GM12878 (cell line): ENCODE measurements at regions of chr11 and their contacts with region 1.

Region 1: DNA sequence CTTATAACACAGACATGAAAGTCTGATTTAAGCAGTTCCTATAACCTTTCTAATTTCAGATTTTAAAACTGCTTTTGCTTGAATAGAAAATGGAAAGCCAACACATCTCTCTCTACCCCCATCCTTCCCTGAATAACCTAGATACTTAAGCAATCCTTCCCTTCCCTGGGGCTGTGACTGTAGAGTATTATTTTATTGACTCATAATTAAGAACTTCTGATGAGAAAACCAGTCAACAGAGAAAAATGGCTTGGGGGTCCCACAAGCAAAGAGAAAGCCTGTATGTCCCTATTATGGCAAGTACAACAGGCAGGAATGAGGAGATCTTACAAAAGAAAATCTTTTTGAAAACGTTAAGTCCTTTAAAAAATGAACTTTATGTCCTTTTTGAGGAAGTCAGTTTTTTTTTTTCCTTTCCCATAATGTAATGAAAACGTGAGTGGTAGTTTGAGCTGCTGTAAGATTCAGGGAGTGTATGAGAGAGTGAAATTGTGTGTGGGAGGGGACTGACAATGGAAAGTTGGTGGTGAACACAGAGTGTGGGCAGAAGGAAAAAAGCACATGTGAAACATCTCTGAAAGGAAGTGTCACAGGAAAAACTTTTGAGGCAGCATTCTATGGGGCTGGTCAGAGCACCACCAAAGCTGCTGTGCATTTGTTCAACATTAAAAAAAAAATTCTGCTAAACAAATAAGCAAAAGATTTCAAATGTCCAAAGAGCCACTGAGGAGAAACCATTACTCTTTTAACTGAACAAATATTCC is 154.6 kb downstream of the MAML2 start:
- DNase-seq: peak; percentile 75
- ATAC-seq: peak; percentile 67
- H3K4me3 ChIP-seq: no peak overlapping the region
- H3K27ac ChIP-seq: peak overlapping the region; percentile 93
- H3K4me1 ChIP-seq: peaks cover 76% of the 10 kb centered on the region
- H3K27me3 ChIP-seq: no peaks in the 10 kb centered on the region
- CTCF ChIP-seq: no peak
- EP300 ChIP-seq: peak; percentile 23 to 78; a peak in 3 of 4 replicates
- POLR2A ChIP-seq: no peak
- RAD21 ChIP-seq: no peak

Region 2: DNA sequence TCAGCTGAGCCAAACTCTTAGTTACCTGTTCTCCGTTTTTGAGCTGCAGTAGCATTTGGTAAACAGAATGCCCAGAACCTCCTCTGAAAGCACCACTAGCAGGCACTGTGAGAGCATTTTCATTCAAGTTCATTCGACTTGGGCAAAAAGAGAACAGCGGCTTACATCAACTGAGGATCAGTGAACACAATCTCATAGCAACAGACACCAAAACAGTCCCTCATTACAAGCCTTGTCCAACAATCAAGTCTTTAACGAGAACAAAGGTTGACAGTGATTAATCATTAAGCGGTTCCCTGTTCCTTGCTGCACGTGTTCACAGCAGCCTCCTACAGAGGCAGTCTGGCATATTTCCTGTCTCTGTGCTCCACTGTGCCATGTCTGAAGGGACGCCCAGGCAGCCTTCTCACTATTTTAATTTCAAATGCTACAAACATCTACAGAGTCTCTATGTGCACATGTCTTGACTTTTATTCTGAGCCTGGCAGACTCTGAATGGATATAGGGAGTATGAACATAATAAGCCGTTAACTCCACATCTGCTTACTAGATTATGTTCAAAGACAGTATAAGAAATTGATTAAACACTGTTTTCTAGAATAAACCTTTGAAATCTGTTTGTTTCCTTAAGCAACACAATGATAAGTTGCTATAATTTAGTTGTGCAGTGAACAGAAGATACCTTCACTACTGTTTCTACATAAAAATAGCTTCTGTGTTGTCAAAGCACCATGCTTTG is 176.2 kb before region 1 on chr11:
- CTCF ChIA-PET with region 1: interaction called, 3 read pairs
- POLR2A ChIA-PET with region 1: no interaction called
- RAD21 ChIA-PET with region 1: interaction called, 3 read pairs
- SMC1A ChIA-PET with region 1: interaction called, 4 read pairs
- in situ Hi-C with region 1: no loop called
- intact Hi-C with region 1: loop called (anchors 2 kb)
- DNase-seq: peak; percentile 96
- ATAC-seq: peak; percentile 93
- H3K4me3 ChIP-seq: no peak overlapping the region
- H3K27ac ChIP-seq: peak overlapping the region; percentile 59
- H3K4me1 ChIP-seq: peaks cover 32% of the 10 kb centered on the region
- H3K27me3 ChIP-seq: no peaks in the 10 kb centered on the region
- CTCF ChIP-seq: peak; percentile 78 to 91 (median 87)
- EP300 ChIP-seq: peak; percentile 76 to 86; a peak in 2 of 4 replicates
- POLR2A ChIP-seq: no peak
- RAD21 ChIP-seq: peak; percentile 84

Region 3: DNA sequence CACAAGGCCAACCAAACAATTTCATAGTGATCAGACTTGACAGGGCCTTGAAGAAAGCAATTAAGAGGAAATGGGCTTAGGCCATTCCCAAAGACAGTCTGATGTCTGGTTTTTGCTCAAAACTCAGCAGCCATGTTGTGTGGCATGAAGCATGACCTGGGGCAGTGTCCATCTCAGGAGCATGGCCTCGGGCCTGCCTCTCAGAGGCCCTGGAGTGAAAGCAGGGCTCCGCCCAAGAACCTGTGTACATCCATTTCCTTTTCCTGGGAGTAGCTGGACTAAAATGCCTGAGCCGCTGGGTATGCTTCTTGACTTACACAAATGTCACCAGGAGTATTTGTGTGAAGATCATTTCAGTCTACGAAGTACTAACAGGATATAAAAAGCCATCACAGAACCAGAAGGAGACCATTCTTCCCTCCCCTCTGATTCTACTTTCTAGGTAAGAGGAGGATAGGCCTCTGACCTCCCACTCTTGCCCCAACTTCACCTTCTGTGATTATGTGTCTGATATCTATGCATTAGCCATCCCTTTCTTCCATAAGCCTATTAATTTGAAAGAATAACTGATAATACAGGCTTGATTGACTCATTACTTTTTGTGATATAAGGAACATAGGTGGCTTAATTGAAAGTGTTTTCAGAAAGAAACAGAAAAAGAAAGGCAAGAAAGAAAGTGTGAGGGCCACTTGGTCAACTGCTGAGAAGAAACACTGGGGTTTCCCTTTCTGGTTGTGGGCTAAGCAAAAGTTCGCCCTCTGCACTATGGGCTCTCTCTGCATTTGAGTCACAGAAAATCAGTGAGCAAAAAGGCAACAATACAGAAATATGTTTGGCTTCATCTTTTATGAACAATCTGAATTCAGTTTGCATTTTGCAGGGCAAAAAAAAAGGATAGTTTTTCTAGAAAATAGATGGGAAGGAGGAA is 76.0 kb before region 1 on chr11:
- CTCF ChIA-PET with region 1: no interaction called
- POLR2A ChIA-PET with region 1: no interaction called
- RAD21 ChIA-PET with region 1: interaction called, 5 read pairs
- SMC1A ChIA-PET with region 1: interaction called, 3 read pairs
- in situ Hi-C with region 1: no loop called
- intact Hi-C with region 1: loop called (anchors 2 kb)
- DNase-seq: peak; percentile 58
- ATAC-seq: peak; percentile 96
- H3K4me3 ChIP-seq: no peak overlapping the region
- H3K27ac ChIP-seq: peak overlapping the region; percentile 76
- H3K4me1 ChIP-seq: peaks cover 32% of the 10 kb centered on the region
- H3K27me3 ChIP-seq: no peaks in the 10 kb centered on the region
- CTCF ChIP-seq: no peak
- EP300 ChIP-seq: peak; percentile 48 to 51; a peak in 2 of 4 replicates
- POLR2A ChIP-seq: no peak
- RAD21 ChIP-seq: peak; percentile 17; the same call in 1 of the 2 replicates

Region 4: DNA sequence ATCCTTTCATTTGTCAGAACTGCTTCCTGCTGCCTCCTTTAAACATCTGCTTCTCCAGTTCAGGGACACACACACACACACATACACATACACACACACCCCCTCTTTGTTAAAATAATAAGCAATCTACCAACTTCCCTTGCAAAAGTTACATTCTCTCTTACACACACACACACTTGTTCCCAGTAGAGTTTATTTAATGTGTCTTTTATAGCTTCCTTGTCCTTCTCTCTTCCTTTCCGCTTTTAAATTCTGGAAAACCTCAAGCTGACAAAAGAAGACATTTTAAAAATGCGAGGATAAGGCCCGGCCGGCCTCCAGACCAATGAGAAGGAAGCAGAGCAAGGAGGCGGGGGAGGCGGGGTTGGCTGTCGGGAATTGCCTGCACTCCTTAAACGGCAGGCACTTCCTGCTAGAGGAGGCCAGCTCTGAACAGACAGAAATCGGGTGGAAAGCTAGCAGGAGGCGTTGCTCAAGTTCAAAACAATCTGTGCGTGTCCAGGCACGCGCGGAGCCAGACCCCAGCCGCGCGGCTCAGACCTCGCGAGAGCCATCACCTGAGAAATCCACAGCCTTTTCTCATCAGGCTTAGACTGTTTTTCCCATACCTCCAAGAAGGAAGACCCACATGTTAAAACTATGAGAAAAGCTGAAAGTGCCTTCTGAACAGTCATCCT is 54.7 kb after region 1 on chr11:
- CTCF ChIA-PET with region 1: interaction called, 3 read pairs
- POLR2A ChIA-PET with region 1: interaction called, 5 read pairs
- RAD21 ChIA-PET with region 1: interaction called, 12 read pairs
- SMC1A ChIA-PET with region 1: interaction called, 6 read pairs
- in situ Hi-C with region 1: no loop called
- intact Hi-C with region 1: no loop called
- DNase-seq: peak; percentile 86
- ATAC-seq: peak; percentile 93
- H3K4me3 ChIP-seq: peak overlapping the region; percentile 60
- H3K27ac ChIP-seq: peak overlapping the region; percentile 68
- H3K4me1 ChIP-seq: peaks cover 14% of the 10 kb centered on the region; the same call in 1 of the 2 replicates
- H3K27me3 ChIP-seq: no peaks in the 10 kb centered on the region
- CTCF ChIP-seq: no peak
- EP300 ChIP-seq: no peak
- POLR2A ChIP-seq: peak; percentile 73
- RAD21 ChIP-seq: no peak; the same call in 1 of the 2 replicates

Region 5: DNA sequence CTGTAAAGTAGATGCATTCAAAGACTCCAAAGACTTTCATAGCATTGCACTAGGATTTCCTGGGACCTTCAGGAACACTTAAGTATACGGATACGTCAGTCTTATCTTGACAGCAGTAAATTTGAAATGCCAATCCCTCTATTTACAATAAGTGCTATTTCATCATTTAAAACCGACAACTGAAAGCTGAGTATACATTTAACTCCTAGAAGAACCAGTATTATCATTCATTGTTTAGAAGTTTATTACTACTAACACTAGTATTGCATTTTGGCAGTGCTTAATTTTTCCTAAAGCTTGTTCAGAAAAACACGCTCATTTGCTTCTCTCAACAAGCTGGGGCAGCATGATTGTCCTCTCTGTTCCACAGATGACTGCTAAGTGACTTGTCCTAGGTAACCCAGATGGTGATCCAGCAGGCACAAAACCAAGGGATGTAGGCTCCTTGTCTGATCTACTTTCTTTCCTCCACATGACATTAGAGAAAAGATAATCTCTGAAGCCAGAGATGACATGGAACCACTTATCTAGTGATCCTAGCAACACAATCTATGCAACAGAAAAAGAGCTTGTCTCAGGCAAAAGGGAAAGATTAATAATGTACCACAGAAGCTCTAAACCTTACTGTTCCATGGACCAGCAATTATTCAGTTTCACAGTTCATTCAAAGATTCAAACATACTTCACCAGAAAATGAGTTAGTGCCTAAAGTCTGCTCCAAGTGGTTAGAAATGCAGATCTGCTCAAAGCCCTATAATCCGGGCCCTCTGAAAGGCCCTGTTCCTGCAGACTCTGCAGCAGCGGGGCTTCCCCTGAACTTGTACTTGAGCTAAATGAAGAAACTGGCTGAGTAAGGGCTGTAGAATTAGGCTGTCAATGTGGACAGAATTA is 149.4 kb after region 1 on chr11:
- CTCF ChIA-PET with region 1: interaction called, 86 read pairs
- POLR2A ChIA-PET with region 1: interaction called, 3 read pairs
- RAD21 ChIA-PET with region 1: interaction called, 43 read pairs
- SMC1A ChIA-PET with region 1: interaction called, 34 read pairs
- in situ Hi-C with region 1: no loop called
- intact Hi-C with region 1: no loop called
- DNase-seq: no peak
- ATAC-seq: peak; percentile 52
- H3K4me3 ChIP-seq: peak overlapping the region; percentile 100
- H3K27ac ChIP-seq: peak overlapping the region; percentile 80
- H3K4me1 ChIP-seq: peaks cover 4% of the 10 kb centered on the region
- H3K27me3 ChIP-seq: no peaks in the 10 kb centered on the region
- CTCF ChIP-seq: no peak
- EP300 ChIP-seq: no peak
- POLR2A ChIP-seq: no peak
- RAD21 ChIP-seq: no peak

Region 6: DNA sequence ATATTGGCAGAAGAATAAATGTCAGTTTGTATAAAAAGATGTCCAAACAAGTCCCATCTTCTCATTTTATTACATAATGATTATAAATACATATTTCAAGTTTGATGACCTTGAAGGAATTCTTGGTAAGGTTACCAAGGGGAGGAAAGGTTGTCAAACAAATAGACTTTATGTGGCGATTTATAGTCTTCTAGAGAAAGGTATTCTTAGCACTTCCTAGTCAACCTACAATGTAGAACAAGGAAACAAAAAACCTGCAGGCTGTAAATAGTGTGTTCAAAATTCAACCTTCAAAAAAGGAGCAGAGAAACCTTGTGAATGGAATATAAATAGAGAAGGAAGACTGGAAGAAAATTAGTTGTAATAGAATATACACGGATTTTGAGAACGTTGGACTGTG is 392.2 kb after region 1 on chr11:
- CTCF ChIA-PET with region 1: no interaction called
- POLR2A ChIA-PET with region 1: no interaction called
- RAD21 ChIA-PET with region 1: no interaction called
- SMC1A ChIA-PET with region 1: no interaction called
- in situ Hi-C with region 1: no loop called
- intact Hi-C with region 1: no loop called
- DNase-seq: no peak
- ATAC-seq: no peak
- H3K4me3 ChIP-seq: no peak overlapping the region
- H3K27ac ChIP-seq: no peak overlapping the region
- H3K4me1 ChIP-seq: no peaks in the 10 kb centered on the region
- H3K27me3 ChIP-seq: no peaks in the 10 kb centered on the region
- CTCF ChIP-seq: no peak
- EP300 ChIP-seq: no peak
- POLR2A ChIP-seq: no peak
- RAD21 ChIP-seq: no peak